ENCODE measurements at regions of chr15 and their contacts with region 1.

Region 1: DNA sequence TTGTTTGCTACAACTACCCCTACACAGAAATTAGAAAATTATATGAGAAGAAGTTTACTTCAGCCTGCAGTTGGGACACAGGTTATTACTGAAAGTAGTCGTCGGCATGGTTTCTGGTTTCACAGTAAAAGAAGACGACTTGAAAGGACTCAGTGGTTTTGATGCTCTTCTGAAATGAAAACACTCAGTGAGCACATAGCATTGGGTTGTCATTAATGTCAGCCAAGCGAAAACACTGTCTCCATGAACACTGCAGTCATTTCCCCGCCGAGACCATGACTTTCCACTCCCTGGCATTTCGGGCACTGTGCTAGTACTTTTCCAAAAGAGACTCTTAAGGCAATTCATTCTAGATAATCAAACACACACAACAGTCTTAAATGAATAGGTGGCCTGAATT is 69.2 kb upstream of the ICE2 start:
- DNase-seq: peak; percentile 47 to 68 (median 58)
- H3K4me3 ChIP-seq: no peak overlapping the region
- H3K4me3 Mint-ChIP-seq: peak overlapping the region; percentile 68 to 86 (median 77)
- H3K27ac ChIP-seq: peak overlapping the region; percentile 68
- H3K27ac Mint-ChIP-seq: peak overlapping the region; percentile 92 to 99 (median 97)
- H3K4me1 ChIP-seq: peaks cover 100% of the 10 kb centered on the region
- H3K4me1 Mint-ChIP-seq: peaks cover 80 to 100% (median 90%) of the 10 kb centered on the region in 4 donors
- H3K27me3 ChIP-seq: no peaks in the 10 kb centered on the region
- H3K27me3 Mint-ChIP-seq: no peaks in the 10 kb centered on the region

Region 2: GRCh38 chr15:60568301-60568742 is 20.2 kb after region 1 on chr15:
- CTCF ChIA-PET with region 1: interaction called, 37 read pairs
- POLR2A ChIA-PET with region 1: interaction called, 381 read pairs
- intact Hi-C with region 1: loop called (anchors 2 kb)
- DNase-seq: peak in 1 of 5 donors; percentile 39
- H3K4me3 ChIP-seq: peak overlapping the region; percentile 2 to 20
- H3K4me3 Mint-ChIP-seq: peak overlapping the region; percentile 8 to 77 (median 70)
- H3K27ac ChIP-seq: peak overlapping the region; percentile 61
- H3K27ac Mint-ChIP-seq: peak overlapping the region; percentile 81 to 97 (median 92)
- H3K4me1 ChIP-seq: peaks cover 99% of the 10 kb centered on the region
- H3K4me1 Mint-ChIP-seq: peaks cover 84 to 98% (median 90%) of the 10 kb centered on the region in 4 donors
- H3K27me3 ChIP-seq: no peaks in the 10 kb centered on the region
- H3K27me3 Mint-ChIP-seq: no peaks in the 10 kb centered on the region

Region 3: GRCh38 chr15:60573936-60574335 is 25.8 kb after region 1 on chr15:
- CTCF ChIA-PET with region 1: interaction called, 35 read pairs
- POLR2A ChIA-PET with region 1: interaction called, 381 read pairs
- intact Hi-C with region 1: loop called (anchors 2 kb)
- DNase-seq: peak; percentile 61 to 90 (median 63)
- H3K4me3 ChIP-seq: peak overlapping the region in 1 of 2 donors; percentile 12
- H3K4me3 Mint-ChIP-seq: peak overlapping the region; percentile 81 to 94 (median 89)
- H3K27ac ChIP-seq: peak overlapping the region; percentile 74
- H3K27ac Mint-ChIP-seq: peak overlapping the region; percentile 92 to 100 (median 99)
- H3K4me1 ChIP-seq: peaks cover 99% of the 10 kb centered on the region
- H3K4me1 Mint-ChIP-seq: peaks cover 76 to 96% (median 86%) of the 10 kb centered on the region in 4 donors
- H3K27me3 ChIP-seq: no peaks in the 10 kb centered on the region
- H3K27me3 Mint-ChIP-seq: no peaks in the 10 kb centered on the region

Region 4: DNA sequence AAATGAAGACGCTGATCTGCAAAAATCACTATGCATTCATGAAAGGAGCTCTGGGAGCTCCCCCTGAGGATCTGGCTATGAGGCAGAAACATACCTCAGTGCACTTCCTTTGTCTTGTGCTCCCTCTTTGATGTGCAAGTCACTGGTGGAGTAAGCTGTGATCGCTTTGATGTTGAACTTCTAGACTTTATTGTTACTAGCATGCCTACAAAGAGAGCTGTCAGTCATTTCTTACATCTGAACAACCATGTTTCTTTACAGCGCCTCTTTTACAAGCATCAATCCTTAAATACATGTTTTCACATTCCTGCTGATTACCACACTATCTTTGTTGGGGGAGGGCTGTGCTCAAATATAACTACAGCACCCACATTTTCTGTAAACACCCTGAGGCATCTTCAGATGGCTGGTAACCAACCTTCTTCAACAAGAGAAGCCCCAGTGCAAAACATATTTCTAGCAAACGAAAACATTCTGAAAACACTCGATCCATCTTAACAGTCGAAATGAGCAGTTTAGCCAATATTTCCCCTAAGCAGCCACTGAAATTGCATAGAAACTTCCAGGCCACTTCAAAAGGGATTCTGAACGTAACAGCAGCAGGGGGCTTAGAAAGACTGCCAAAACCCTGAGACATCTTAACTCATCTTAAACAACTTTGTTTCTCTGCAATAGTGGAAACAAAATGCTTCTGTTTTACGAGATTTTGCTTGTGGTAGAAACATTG is 32.7 kb after region 1 on chr15:
- CTCF ChIA-PET with region 1: interaction called, 53 read pairs
- POLR2A ChIA-PET with region 1: interaction called, 381 read pairs
- intact Hi-C with region 1: loop called (anchors 2 kb)
- DNase-seq: peak; percentile 74 to 88 (median 83)
- H3K4me3 ChIP-seq: peak overlapping the region in 1 of 2 donors; percentile 16
- H3K4me3 Mint-ChIP-seq: peak overlapping the region; percentile 73 to 89 (median 82)
- H3K27ac ChIP-seq: peak overlapping the region; percentile 92
- H3K27ac Mint-ChIP-seq: peak overlapping the region; percentile 92 to 98 (median 97)
- H3K4me1 ChIP-seq: peaks cover 99% of the 10 kb centered on the region
- H3K4me1 Mint-ChIP-seq: peaks cover 73 to 96% (median 85%) of the 10 kb centered on the region in 4 donors
- H3K27me3 ChIP-seq: no peaks in the 10 kb centered on the region
- H3K27me3 Mint-ChIP-seq: no peaks in the 10 kb centered on the region